K562 (cell line): ENCODE measurements at regions of chr6 and their contacts with region 1.

Region 1: GRCh38 chr6:46090115-46091079 is 39.4 kb upstream of the ENPP4 start:
- DNase-seq: peak; percentile 65 to 75 (median 70)
- ATAC-seq: peak; percentile 86
- H3K4me3 ChIP-seq: no peak overlapping the region
- H3K27ac ChIP-seq: no peak overlapping the region
- H3K4me1 ChIP-seq: no peaks in the 10 kb centered on the region
- H3K27me3 ChIP-seq: no peaks in the 10 kb centered on the region
- CTCF ChIP-seq: peak; percentile 68 to 81 (median 73)
- EP300 ChIP-seq: no peak
- POLR2A ChIP-seq: no peak
- RAD21 ChIP-seq: peak; percentile 57 to 70

Region 2: GRCh38 chr6:45930420-45931040 is 159.9 kb before region 1 on chr6:
- CTCF ChIA-PET with region 1: interaction called, 3 read pairs
- POLR2A ChIA-PET with region 1: no interaction called
- in situ Hi-C with region 1: no loop called
- intact Hi-C with region 1: loop called (anchors 5 kb)
- DNase-seq: peak; percentile 73 to 82 (median 79)
- ATAC-seq: peak; percentile 94
- H3K4me3 ChIP-seq: no peak overlapping the region
- H3K27ac ChIP-seq: no peak overlapping the region
- H3K4me1 ChIP-seq: peaks cover 0 to 2% of the 10 kb centered on the region in 2 experiments; a peak in 1 of 5 replicates
- H3K27me3 ChIP-seq: peaks cover 0 to 13% of the 10 kb centered on the region in 2 experiments; a peak in 2 of 5 replicates
- CTCF ChIP-seq: peak; percentile 83 to 97 (median 94)
- EP300 ChIP-seq: no peak
- POLR2A ChIP-seq: no peak
- RAD21 ChIP-seq: peak; percentile 55 to 78

Region 3: DNA sequence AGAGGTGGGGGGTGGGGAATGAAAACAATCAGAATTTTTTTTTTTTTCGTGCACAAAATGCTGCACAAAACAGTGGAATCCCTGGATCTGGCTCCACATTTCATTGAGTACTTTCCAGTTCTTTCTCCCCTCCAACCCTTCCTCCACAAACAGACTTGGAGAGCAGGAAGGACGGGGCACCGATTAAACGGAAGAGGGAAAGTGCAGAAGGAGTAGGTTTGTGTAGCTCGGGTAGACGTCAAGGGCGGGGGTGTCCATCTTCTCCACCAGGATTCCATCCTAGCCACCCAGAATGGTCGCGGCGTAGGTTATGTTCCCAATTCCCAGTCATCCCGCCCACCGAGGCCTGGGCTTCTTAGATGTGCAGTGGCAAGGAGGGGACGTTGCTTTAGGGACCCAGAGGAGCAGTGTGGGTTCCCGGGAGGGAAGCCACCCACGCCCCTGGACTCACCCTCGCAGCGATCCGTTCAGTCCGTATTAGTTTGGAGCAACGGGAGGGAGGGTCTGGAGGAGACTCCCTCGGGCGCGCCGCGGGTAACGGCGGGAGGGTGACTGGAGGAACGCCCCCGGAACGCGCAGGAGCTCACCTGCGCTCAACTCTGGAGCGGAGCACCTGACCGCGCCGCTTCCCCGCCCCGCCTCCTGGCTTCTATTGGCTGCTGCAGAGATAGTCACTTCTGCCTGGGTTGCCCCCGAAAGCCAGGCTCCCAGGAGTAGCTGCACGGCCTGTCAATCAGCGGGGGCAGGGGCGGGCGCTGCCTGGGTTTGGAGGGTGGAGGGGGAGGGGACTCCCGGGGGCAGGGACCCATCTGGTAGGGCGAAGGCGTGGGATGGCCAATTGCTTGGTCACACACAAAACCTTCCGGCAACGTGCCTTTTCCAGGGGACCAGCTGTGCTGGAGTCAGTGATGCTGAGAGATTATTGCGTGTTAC is 80.2 kb after region 1 on chr6 and contains the start of gene ENPP5:
- CTCF ChIA-PET with region 1: no interaction called
- POLR2A ChIA-PET with region 1: no interaction called
- in situ Hi-C with region 1: no loop called
- intact Hi-C with region 1: no loop called
- DNase-seq: peak; percentile 12 to 37 (median 22)
- ATAC-seq: peak; percentile 85
- H3K4me3 ChIP-seq: no peak within 1 kb of the TSS
- H3K27ac ChIP-seq: no peak within 1 kb of the TSS
- H3K4me1 ChIP-seq: peaks cover 0 to 5% of the 10 kb centered on the region in 2 experiments; a peak in 2 of 5 replicates
- H3K27me3 ChIP-seq: peaks cover 3 to 7% of the 10 kb centered on the region in 2 experiments; a peak in 1 of 5 replicates
- CTCF ChIP-seq: no peak
- EP300 ChIP-seq: no peak
- POLR2A ChIP-seq: no peak
- RAD21 ChIP-seq: no peak
- polyA plus RNA-seq, gene ENPP5: not detected

Region 4: GRCh38 chr6:46221222-46221793 is 130.9 kb after region 1 on chr6:
- CTCF ChIA-PET with region 1: no interaction called
- POLR2A ChIA-PET with region 1: no interaction called
- in situ Hi-C with region 1: no loop called
- intact Hi-C with region 1: loop called (anchors 1 kb)
- DNase-seq: peak; percentile 18 to 41 (median 35)
- ATAC-seq: peak; percentile 77
- H3K4me3 ChIP-seq: no peak overlapping the region
- H3K27ac ChIP-seq: no peak overlapping the region
- H3K4me1 ChIP-seq: no peaks in the 10 kb centered on the region
- H3K27me3 ChIP-seq: no peaks in the 10 kb centered on the region
- CTCF ChIP-seq: peak; percentile 46 to 75 (median 60); a peak in 5 of 6 replicates
- EP300 ChIP-seq: no peak
- POLR2A ChIP-seq: no peak
- RAD21 ChIP-seq: peak; percentile 56 to 72

Region 5: GRCh38 chr6:46410334-46410953 is 320.0 kb after region 1 on chr6:
- CTCF ChIA-PET with region 1: interaction called, 19 read pairs
- POLR2A ChIA-PET with region 1: no interaction called
- in situ Hi-C with region 1: loop called (anchors 10 kb)
- intact Hi-C with region 1: loop called (anchors 1 kb)
- DNase-seq: peak; percentile 35 to 45 (median 40)
- ATAC-seq: peak; percentile 54; the same call in 1 of the 3 replicates
- H3K4me3 ChIP-seq: no peak overlapping the region
- H3K27ac ChIP-seq: no peak overlapping the region
- H3K4me1 ChIP-seq: no peaks in the 10 kb centered on the region
- H3K27me3 ChIP-seq: no peaks in the 10 kb centered on the region
- CTCF ChIP-seq: peak; percentile 59 to 89 (median 73); a peak in 5 of 6 replicates
- EP300 ChIP-seq: no peak
- POLR2A ChIP-seq: no peak
- RAD21 ChIP-seq: peak; percentile 92 to 93

Region 6: DNA sequence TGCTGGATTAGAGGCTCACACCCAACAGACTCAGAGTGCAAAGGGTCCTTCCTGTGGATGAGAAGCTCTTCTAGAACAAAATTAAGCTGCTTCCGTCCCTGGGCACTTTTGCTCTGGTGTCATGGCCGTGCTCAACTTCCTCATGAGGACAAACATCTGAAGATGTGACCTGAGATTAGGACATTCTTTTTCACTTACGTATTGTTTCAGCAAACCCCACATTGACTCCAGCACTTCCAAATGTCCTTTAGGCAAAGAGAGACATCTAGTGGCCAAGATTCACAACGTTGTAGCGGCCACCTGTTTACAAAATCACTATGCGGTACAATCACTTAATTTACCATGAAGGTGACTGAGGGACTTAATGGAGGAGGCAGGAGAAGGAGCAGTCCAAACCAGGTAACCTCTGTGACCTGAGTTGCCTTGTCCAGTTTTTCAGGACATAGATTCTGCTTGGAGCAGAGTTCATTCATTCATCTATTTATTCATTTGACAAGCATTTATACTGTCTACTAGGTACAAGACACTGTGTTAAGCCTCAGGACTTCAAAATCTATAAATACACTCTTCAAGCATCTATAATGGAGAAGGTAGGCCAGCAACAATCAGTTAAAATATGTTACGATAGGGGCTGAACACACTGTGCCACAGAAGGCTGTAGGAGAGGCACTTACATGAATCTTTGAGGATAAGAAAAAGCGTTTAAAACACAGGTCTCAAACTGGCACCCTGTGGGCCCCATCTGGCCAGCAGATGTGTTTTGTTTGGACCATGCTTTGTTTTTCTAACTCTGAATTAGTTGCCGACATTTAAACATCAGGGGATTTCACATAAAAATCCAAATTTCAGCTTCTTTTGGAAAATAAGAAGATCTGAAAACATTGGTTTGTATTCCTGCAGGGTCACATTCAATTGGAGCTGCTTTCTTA is 957.3 kb after region 1 on chr6:
- CTCF ChIA-PET with region 1: interaction called, 3 read pairs
- POLR2A ChIA-PET with region 1: no interaction called
- in situ Hi-C with region 1: no loop called
- intact Hi-C with region 1: loop called (anchors 5 kb)
- DNase-seq: peak; percentile 27 to 72 (median 39)
- ATAC-seq: peak; percentile 99
- H3K4me3 ChIP-seq: no peak overlapping the region
- H3K27ac ChIP-seq: no peak overlapping the region
- H3K4me1 ChIP-seq: no peaks in the 10 kb centered on the region
- H3K27me3 ChIP-seq: no peaks in the 10 kb centered on the region
- CTCF ChIP-seq: peak; percentile 74 to 90 (median 84)
- EP300 ChIP-seq: no peak
- POLR2A ChIP-seq: no peak
- RAD21 ChIP-seq: peak; percentile 70 to 85